ENCODE measurements at regions of chr18 and their contacts with region 1.

Region 1: GRCh38 chr18:26090130-26091046 is at the start of gene SS18:
- DNase-seq: peak; percentile 84 to 95
- ATAC-seq: peak; percentile 83 to 94 (median 86)
- H3K4me3 ChIP-seq: peak within 1 kb of the TSS; percentile 100
- H3K4me3 Mint-ChIP-seq: peak within 1 kb of the TSS; percentile 93
- H3K27ac ChIP-seq: peak within 1 kb of the TSS; percentile 99
- H3K27ac Mint-ChIP-seq: peak within 1 kb of the TSS; percentile 95 to 96
- H3K4me1 ChIP-seq: peaks cover 13% of the 10 kb centered on the region
- H3K4me1 Mint-ChIP-seq: peaks cover 30 to 38% of the 10 kb centered on the region in 2 donors
- H3K27me3 ChIP-seq: no peaks in the 10 kb centered on the region
- H3K27me3 Mint-ChIP-seq: no peaks in the 10 kb centered on the region
- CTCF ChIP-seq: no peak
- total RNA-seq, gene SS18: 72.2 to 92.2 (median 77.7) TPM

Region 2: GRCh38 chr18:26176134-26176533 is 85.7 kb after region 1 on chr18:
- intact Hi-C with region 1: loop called (anchors 5 kb)
- DNase-seq: peak in 1 of 2 donors; percentile 14
- ATAC-seq: no peak
- H3K4me3 ChIP-seq: no peak overlapping the region
- H3K4me3 Mint-ChIP-seq: no peak overlapping the region
- H3K27ac ChIP-seq: no peak overlapping the region
- H3K27ac Mint-ChIP-seq: peak overlapping the region in 1 of 2 donors; percentile 40
- H3K4me1 ChIP-seq: peaks cover 5% of the 10 kb centered on the region
- H3K4me1 Mint-ChIP-seq: peaks cover 5 to 14% of the 10 kb centered on the region in 2 donors
- H3K27me3 ChIP-seq: no peaks in the 10 kb centered on the region
- H3K27me3 Mint-ChIP-seq: peaks cover 0 to 3% of the 10 kb centered on the region in 2 donors
- CTCF ChIP-seq: no peak

Region 3: DNA sequence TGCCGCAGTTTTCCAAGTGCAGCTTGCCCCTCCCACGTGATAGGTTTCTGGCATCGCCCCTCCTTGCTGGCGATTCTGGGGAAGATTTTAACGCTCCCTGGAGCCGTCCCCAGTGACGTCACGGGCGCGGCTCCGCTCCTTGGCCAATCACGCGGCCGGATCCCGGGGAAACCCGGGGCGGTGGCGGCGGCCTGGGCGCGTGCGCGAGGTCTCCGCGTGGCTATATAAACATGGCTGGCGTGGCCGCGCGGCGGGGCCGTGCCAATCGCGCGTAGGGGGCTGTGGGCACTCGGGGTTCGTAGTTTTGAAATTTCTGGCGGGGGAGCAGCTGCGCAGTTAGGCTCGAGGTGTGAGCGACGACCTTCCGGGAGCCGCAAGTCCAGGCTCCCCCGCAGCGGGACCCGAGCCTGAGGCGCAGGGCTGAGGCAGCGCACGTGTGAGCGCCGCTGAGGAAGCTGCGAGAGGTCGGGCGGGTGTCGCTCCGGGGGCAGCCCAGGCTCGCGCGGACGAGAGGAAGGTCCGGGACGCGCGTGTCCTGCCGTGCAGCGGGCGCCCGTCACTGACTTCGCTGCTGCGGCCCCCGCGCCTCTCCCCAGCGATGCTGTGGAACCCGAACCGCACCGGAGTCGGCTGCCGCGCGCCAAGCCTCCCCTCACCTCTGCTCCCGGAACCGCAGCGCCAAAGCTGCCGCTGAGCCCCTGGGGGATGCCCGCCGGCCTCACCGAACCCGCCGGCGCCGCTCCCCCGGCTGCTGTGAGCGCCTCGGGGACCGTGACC is 136.0 kb after region 1 on chr18 and contains the start of gene TAF4B:
- intact Hi-C with region 1: loop called (anchors 1 kb)
- DNase-seq: peak; percentile 72 to 95
- ATAC-seq: peak; percentile 80 to 85 (median 84)
- H3K4me3 ChIP-seq: peak within 1 kb of the TSS; percentile 58
- H3K4me3 Mint-ChIP-seq: peak within 1 kb of the TSS; percentile 95
- H3K27ac ChIP-seq: peak within 1 kb of the TSS; percentile 69
- H3K27ac Mint-ChIP-seq: peak within 1 kb of the TSS; percentile 65 to 86
- H3K4me1 ChIP-seq: peaks cover 8% of the 10 kb centered on the region
- H3K4me1 Mint-ChIP-seq: peaks cover 16 to 24% of the 10 kb centered on the region in 2 donors
- H3K27me3 ChIP-seq: no peaks in the 10 kb centered on the region
- H3K27me3 Mint-ChIP-seq: peaks cover 21 to 22% of the 10 kb centered on the region in 2 donors
- CTCF ChIP-seq: no peak
- total RNA-seq, gene TAF4B: 1.5 to 3.3 (median 1.7) TPM